ENCODE measurements at regions of chr12 and their contacts with region 1.

Region 1: GRCh38 chr12:59792647-59793046 is 196.8 kb downstream of the SLC16A7 start:
- DNase-seq: no peak

Region 2: DNA sequence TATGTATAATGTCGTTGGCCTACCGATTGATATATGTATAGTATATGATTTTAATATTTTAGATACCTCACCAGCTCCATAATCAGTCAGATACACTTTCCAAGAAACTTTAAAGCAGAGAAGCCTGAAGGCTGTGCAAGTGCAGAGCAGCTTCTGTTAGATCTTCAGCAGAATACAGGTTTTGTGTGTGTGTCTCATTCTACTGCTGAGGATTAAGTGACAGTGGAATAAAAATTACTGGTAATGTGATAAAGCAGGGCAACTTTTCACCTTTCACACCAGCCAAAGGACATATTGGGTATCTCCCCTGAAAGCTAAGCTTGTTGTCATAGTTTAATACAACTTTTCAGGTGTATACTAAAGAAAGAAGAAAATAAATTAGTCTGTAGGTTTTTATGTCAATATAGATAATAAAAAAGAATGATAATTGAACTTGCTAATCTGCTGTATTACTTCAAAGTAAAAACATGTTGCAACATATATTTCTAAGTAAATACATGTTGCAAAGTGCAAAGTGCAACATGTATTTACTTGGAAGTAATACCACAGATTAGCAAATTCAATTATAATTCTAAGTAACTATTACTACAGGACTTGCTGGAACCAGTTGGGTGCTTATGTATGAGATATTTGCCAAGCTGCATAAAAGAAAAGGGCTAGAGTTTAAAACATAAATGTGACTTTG is 68.5 kb before region 1 on chr12:
- intact Hi-C with region 1: loop called in 1 of 2 experiments (anchors 2 kb)
- DNase-seq: no peak

Region 3: DNA sequence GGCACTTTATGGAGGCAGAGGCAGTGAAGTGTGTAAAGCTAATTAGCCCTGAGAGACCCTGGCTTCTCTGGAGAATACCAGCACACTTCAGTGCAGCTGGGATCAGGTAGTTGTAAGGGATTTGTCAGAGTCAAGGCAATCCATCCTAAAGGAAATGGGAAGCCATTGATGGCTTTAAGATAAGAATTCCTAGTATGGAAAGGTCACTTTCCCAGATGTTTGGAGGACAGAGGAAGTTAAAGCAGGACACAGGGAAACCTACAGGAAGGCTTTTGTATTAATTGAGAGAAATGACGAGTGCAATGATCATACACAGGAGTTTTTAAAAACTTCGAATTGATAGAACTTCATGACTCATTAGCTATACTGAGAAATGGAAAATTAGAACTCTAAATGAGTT is 57.6 kb after region 1 on chr12:
- intact Hi-C with region 1: no loop called
- DNase-seq: no peak